Endothelial cell of umbilical vein (primary cell): ENCODE measurements at regions of chr7 and their contacts with region 1.

Region 1: DNA sequence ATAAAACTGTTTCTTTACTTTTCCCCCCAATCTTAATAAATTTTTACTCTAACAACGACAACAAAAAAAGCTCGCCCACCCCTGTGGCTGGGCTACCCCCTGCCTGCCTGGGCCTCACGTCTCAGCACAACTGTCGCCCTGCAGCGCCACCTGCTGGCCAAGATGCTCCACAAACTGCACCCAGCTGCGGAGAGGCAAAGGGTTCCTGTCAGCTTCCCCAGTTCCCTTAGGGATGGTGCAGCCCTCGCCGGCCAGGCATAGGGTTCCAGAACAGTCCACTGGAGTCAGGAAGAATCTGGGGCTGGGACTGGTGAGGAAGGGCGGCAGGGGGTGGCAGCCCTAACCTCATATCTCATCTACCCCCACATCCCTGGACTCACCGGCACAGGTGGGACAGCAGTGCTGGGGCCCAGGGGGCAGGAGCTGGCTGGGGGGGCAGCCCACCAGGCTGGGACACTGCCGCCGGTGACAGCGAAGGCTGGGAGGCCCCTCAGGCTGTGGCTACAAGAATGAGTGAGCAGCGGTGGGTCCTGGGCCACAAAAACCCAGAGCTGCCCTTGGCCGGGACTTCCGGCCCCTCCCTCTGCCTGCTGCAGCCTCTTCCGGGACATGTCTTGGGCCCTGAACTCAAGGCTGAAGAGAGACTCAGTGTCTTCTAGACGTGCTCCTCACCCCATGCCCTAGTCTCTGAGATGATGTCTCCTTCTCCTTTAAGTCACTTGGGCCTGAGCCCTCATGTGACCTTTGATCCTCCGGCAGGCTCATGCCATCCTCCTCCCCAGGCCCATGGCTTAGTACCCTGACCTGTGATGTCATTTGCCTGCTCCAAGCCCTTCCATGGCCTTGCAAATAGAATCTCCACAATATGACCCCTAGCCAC is 21.2 kb downstream of the ATP6V1F start:
- DNase-seq: peak; percentile 61
- H3K4me3 ChIP-seq: no peak overlapping the region
- H3K27ac ChIP-seq: no peak overlapping the region
- H3K4me1 ChIP-seq: no peaks in the 10 kb centered on the region
- H3K27me3 ChIP-seq: no peaks in the 10 kb centered on the region
- CTCF ChIP-seq: peak; percentile 90 to 92
- POLR2A ChIP-seq: no peak

Region 2: GRCh38 chr7:128767475-128768110 is 116.3 kb before region 1 on chr7:
- CTCF ChIA-PET with region 1: interaction called, 4 read pairs
- POLR2A ChIA-PET with region 1: no interaction called
- dilution Hi-C with region 1: no loop called
- intact Hi-C with region 1: loop called (anchors 5 kb)
- DNase-seq: no peak
- H3K4me3 ChIP-seq: no peak overlapping the region
- H3K27ac ChIP-seq: no peak overlapping the region
- H3K4me1 ChIP-seq: peaks cover 2% of the 10 kb centered on the region
- H3K27me3 ChIP-seq: no peaks in the 10 kb centered on the region
- CTCF ChIP-seq: no peak
- POLR2A ChIP-seq: no peak

Region 3: DNA sequence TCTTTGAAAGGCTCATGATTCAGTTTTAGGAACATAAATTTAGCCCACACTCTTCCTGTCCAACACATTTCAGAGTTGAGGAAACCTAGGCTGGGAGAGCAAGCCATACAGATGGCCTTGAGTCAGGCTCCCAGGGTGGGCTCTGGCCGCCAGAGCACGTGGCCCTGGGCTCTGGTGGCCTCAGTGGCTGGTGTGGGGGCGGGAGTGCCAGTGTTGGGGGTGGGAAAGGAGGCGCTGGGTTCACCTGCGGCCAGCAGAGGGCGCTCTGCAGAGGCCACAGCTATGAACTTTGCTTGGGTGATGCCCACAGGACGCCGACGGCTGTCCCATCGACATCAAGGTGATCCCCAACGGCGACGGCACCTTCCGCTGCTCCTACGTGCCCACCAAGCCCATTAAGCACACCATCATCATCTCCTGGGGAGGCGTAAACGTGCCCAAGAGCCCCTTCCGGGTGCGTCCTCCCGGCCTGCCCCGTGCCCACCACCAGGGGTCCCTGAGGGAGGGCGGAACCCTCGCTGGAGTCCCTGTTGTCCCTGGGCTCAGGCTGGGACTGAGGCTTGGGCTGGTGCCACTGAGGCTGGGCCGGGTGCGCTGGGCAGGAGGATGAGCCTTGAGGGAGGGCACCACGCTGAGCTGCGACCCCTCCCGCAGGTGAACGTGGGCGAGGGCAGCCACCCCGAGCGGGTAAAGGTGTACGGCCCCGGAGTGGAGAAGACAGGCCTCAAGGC is 41.8 kb before region 1 on chr7:
- CTCF ChIA-PET with region 1: interaction called, 6 read pairs
- POLR2A ChIA-PET with region 1: no interaction called
- dilution Hi-C with region 1: no loop called
- intact Hi-C with region 1: loop called (anchors 1 kb)
- DNase-seq: peak; percentile 41
- H3K4me3 ChIP-seq: no peak overlapping the region
- H3K27ac ChIP-seq: no peak overlapping the region
- H3K4me1 ChIP-seq: no peaks in the 10 kb centered on the region
- H3K27me3 ChIP-seq: no peaks in the 10 kb centered on the region
- CTCF ChIP-seq: peak; percentile 58 to 86
- POLR2A ChIP-seq: no peak

Region 4: DNA sequence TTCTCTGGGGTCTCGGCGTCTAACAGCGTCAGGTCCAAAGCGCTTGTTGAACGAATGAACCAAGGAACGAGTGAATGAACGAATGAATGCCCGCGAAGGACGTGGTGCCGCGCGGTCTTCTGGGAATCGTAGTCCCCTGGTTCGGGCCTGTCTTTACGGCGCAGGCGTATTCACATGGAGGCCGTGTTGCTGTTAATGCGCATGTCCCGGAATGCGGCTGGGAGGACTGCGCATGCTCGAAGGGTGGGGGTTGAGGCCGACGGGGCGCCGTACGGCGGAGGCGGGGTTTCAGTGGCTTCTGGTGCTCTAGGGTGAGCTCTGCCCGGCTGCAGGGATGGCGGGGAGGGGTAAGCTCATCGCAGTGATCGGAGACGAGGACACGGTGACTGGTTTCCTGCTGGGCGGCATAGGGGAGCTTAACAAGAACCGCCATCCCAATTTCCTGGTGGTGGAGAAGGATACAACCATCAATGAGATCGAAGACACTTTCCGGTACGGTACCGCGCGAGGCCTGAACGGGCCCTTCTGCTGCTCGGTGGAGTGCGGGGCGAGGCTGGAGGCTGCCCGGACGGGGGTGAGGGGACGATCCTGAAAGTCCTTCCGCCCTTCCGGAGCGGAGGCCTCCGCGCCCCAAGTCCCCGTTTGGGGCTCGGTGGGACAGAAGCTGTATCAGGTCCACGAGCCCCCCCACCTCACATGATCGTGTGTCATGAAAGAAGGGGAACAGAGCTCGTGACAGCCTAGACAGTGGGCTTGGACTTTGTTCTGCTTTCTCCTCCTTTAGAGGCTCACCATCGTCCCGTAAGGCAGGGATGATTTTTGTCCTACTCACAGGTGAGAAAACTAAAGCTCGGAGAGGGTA is 21.1 kb before region 1 on chr7 and contains the start of gene ATP6V1F:
- CTCF ChIA-PET with region 1: interaction called, 42 read pairs
- POLR2A ChIA-PET with region 1: no interaction called
- dilution Hi-C with region 1: no loop called
- intact Hi-C with region 1: loop called (anchors 1 kb)
- DNase-seq: peak; percentile 100
- H3K4me3 ChIP-seq: peak within 1 kb of the TSS; percentile 48 to 67 (median 62)
- H3K27ac ChIP-seq: peak within 1 kb of the TSS; percentile 57
- H3K4me1 ChIP-seq: peaks cover 9% of the 10 kb centered on the region
- H3K27me3 ChIP-seq: no peaks in the 10 kb centered on the region
- CTCF ChIP-seq: no peak
- POLR2A ChIP-seq: peak; percentile 91
- total RNA-seq, gene ATP6V1F: 141 and 156 TPM in 2 replicates

Region 5: GRCh38 chr7:128906001-128906765 is 22.3 kb after region 1 on chr7:
- CTCF ChIA-PET with region 1: no interaction called
- POLR2A ChIA-PET with region 1: no interaction called
- dilution Hi-C with region 1: no loop called
- intact Hi-C with region 1: no loop called
- DNase-seq: no peak
- H3K4me3 ChIP-seq: no peak overlapping the region
- H3K27ac ChIP-seq: no peak overlapping the region
- H3K4me1 ChIP-seq: peaks cover 5% of the 10 kb centered on the region
- H3K27me3 ChIP-seq: peaks cover 22 to 24% of the 10 kb centered on the region in 2 experiments
- CTCF ChIP-seq: no peak
- POLR2A ChIP-seq: no peak